HepG2 (cell line): ENCODE measurements at regions of chr6 and their contacts with region 1.

Region 1: DNA sequence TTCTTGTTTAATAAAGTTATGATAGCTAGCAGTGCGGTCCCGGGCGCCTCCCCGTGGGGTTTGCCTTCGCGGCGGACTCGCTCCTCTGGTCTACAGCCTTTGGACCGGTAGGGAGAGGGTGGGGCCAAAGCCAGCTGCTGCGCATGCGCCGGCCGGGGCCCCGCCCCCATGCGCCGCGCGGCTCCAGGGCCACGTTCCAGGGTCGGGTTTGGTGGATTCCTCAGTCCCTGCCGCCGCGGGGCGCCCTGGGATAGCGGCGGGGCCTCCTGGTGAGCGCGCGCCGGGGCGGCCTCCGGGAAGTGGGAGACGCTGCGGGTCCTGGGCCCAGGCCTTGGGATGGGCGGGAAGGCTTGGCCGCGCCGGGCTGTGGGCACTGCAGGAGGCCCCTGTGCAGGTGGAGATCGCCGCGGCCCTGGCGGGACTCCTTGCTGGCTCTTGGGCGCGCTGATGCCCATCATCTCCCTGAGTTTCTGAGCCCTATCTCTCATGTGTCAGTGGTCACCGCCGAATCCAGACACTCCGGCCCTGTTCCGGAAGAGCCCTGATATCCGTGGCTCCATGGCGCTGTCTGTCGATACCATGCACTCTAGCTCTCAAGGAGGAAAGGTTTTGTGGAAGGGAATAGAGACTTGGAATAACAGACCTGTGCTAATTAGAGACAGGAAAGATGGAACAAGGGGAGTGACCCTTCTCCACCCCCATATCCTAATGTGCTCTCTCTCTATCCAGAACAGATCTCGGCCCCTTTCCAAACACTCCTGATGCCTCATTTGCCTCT is at the start of gene VARS2:
- DNase-seq: peak; percentile 92
- ATAC-seq: peak; percentile 96
- H3K4me3 ChIP-seq: peak within 1 kb of the TSS; percentile 61 to 80 (median 78)
- H3K27ac ChIP-seq: peak within 1 kb of the TSS; percentile 81
- H3K4me1 ChIP-seq: peaks cover 32% of the 10 kb centered on the region
- H3K27me3 ChIP-seq: no peaks in the 10 kb centered on the region
- CTCF ChIP-seq: peak; percentile 81
- EP300 ChIP-seq: peak in 1 of 2 experiments; percentile 35; a peak in 1 of 4 replicates
- POLR2A ChIP-seq: peak; percentile 85 to 89
- RAD21 ChIP-seq: peak; percentile 85; the same call in 1 of the 2 replicates
- total RNA-seq, gene VARS2: 45.9 and 71.8 TPM in 2 replicates

Region 2: DNA sequence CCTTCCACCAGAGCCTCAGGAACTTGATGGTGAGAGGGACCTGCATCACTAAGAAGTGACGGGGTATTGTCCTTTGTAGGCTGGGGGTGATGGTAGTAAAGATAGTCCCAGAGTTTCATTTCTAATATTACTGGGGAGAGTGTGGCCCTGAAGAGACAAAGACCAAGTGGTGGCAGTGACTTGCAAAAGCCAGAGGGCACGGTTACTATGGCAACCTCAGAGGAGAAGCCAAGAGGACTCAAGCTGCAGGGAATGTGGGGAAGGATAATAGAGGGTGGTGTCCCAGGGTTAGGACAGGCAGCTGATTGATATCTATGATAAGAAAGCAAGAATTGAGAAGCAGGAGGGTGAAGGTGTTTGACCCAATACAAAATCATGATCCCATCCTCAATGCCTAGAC is 1044.2 kb before region 1 on chr6:
- CTCF ChIA-PET with region 1: no interaction called
- POLR2A ChIA-PET with region 1: no interaction called
- in situ Hi-C with region 1: no loop called
- intact Hi-C with region 1: no loop called
- DNase-seq: no peak
- ATAC-seq: no peak
- H3K4me3 ChIP-seq: no peak overlapping the region
- H3K27ac ChIP-seq: no peak overlapping the region
- H3K4me1 ChIP-seq: no peaks in the 10 kb centered on the region
- H3K27me3 ChIP-seq: peaks cover 0 to 24% of the 10 kb centered on the region in 2 experiments; a peak in 2 of 5 replicates
- CTCF ChIP-seq: no peak
- EP300 ChIP-seq: no peak
- POLR2A ChIP-seq: no peak
- RAD21 ChIP-seq: no peak

Region 3: GRCh38 chr6:30883685-30884520 is 30.4 kb before region 1 on chr6 and contains the start of gene DDR1:
- CTCF ChIA-PET with region 1: no interaction called
- POLR2A ChIA-PET with region 1: interaction called, 24 read pairs
- in situ Hi-C with region 1: no loop called
- intact Hi-C with region 1: no loop called
- DNase-seq: peak; percentile 38
- ATAC-seq: peak; percentile 57
- H3K4me3 ChIP-seq: peak within 1 kb of the TSS; percentile 80 to 91 (median 82)
- H3K27ac ChIP-seq: peak within 1 kb of the TSS; percentile 44
- H3K4me1 ChIP-seq: peaks cover 56% of the 10 kb centered on the region
- H3K27me3 ChIP-seq: peaks cover 6 to 27% of the 10 kb centered on the region in 2 experiments
- CTCF ChIP-seq: no peak
- EP300 ChIP-seq: no peak
- POLR2A ChIP-seq: no peak
- RAD21 ChIP-seq: no peak
- total RNA-seq, gene DDR1: 7.0 and 16.7 TPM in 2 replicates

Region 4: DNA sequence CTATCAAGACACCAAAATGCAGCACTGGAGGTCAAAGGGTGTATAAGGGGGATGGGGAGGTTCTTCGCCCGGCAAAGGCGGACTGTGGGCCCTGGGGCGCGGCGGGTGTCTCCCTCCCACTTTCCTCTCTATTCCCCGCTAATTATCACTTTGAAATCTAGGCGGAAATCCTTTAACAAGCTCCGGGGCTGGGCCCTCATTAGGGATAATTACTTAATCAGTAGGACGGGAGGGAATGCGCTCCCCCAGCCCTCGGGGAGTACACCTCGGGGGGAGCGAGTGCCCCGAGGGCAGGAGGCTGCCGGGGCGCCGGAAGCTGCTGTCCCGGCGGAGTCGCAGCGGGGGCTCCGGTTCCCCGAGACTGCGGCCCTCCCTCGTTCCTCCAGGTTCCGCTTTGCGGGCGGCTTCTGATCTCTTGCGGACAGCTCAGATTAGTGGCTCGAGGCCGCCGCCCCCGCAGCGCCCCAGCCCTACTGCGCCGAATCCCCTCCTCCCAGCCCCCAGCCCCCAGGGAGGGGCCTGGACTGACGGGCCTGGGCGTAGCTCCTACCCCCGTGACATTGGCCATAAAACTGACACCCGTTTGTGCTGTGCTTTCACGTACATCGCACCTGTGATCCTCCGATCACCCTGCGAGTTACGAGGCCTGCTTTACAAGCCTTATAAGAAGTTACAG is 41.2 kb after region 1 on chr6:
- CTCF ChIA-PET with region 1: no interaction called
- POLR2A ChIA-PET with region 1: no interaction called
- in situ Hi-C with region 1: no loop called
- intact Hi-C with region 1: no loop called
- DNase-seq: no peak
- ATAC-seq: no peak
- H3K4me3 ChIP-seq: no peak overlapping the region
- H3K27ac ChIP-seq: no peak overlapping the region
- H3K4me1 ChIP-seq: no peaks in the 10 kb centered on the region
- H3K27me3 ChIP-seq: peaks cover 2 to 48% of the 10 kb centered on the region in 2 experiments; a peak in 4 of 5 replicates
- CTCF ChIP-seq: no peak
- EP300 ChIP-seq: no peak
- POLR2A ChIP-seq: no peak
- RAD21 ChIP-seq: no peak

Region 5: GRCh38 chr6:31042806-31043205 is 128.5 kb after region 1 on chr6:
- CTCF ChIA-PET with region 1: interaction called, 11 read pairs
- POLR2A ChIA-PET with region 1: interaction called, 3 read pairs
- in situ Hi-C with region 1: loop called (anchors 5 kb)
- intact Hi-C with region 1: loop called (anchors 1 kb)
- DNase-seq: peak; percentile 56
- ATAC-seq: peak; percentile 64
- H3K4me3 ChIP-seq: no peak overlapping the region
- H3K27ac ChIP-seq: no peak overlapping the region
- H3K4me1 ChIP-seq: peaks cover 12% of the 10 kb centered on the region
- H3K27me3 ChIP-seq: peaks cover 0 to 26% of the 10 kb centered on the region in 2 experiments; a peak in 3 of 5 replicates
- CTCF ChIP-seq: peak; percentile 75
- EP300 ChIP-seq: no peak
- POLR2A ChIP-seq: no peak
- RAD21 ChIP-seq: 0 out of 2 replicates have a peak, but pooled peaks have one; percentile 48

Region 6: DNA sequence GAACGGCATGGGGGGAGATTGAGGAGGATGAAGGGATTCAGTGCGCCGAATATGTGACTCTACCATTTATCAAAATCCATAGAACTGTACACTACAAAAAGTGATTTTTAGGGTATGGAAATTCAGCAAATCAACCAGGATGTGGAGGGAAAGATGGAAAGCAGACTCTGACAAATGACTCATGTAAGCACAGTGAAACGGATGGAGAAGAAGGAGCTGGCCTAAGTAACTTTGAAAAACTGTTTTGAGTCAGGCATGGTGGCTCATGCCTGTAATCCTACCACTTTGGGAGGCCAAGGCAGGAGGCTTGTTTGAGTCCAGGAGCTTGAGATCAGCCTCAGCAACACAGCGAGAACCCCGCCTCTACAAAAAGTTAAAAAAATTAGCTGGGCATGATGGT is 135.3 kb after region 1 on chr6:
- CTCF ChIA-PET with region 1: no interaction called
- POLR2A ChIA-PET with region 1: no interaction called
- in situ Hi-C with region 1: loop called (anchors 5 kb)
- intact Hi-C with region 1: no loop called
- DNase-seq: no peak
- ATAC-seq: no peak
- H3K4me3 ChIP-seq: no peak overlapping the region
- H3K27ac ChIP-seq: no peak overlapping the region
- H3K4me1 ChIP-seq: no peaks in the 10 kb centered on the region
- H3K27me3 ChIP-seq: peaks cover 3 to 39% of the 10 kb centered on the region in 2 experiments; a peak in 3 of 5 replicates
- CTCF ChIP-seq: no peak
- EP300 ChIP-seq: no peak
- POLR2A ChIP-seq: no peak
- RAD21 ChIP-seq: no peak

Region 7: GRCh38 chr6:31068669-31069340 is 154.5 kb after region 1 on chr6:
- CTCF ChIA-PET with region 1: interaction called, 9 read pairs
- POLR2A ChIA-PET with region 1: interaction called, 4 read pairs
- in situ Hi-C with region 1: no loop called
- intact Hi-C with region 1: loop called (anchors 1 kb)
- DNase-seq: peak; percentile 73
- ATAC-seq: peak; percentile 96
- H3K4me3 ChIP-seq: no peak overlapping the region
- H3K27ac ChIP-seq: no peak overlapping the region
- H3K4me1 ChIP-seq: no peaks in the 10 kb centered on the region
- H3K27me3 ChIP-seq: peaks cover 0 to 7% of the 10 kb centered on the region in 2 experiments; a peak in 3 of 5 replicates
- CTCF ChIP-seq: peak; percentile 93
- EP300 ChIP-seq: no peak
- POLR2A ChIP-seq: no peak
- RAD21 ChIP-seq: peak; percentile 53

Region 8: GRCh38 chr6:31079656-31080261 is 165.5 kb after region 1 on chr6:
- CTCF ChIA-PET with region 1: interaction called, 9 read pairs
- POLR2A ChIA-PET with region 1: interaction called, 5 read pairs
- in situ Hi-C with region 1: loop called (anchors 5 kb)
- intact Hi-C with region 1: loop called (anchors 2 kb)
- DNase-seq: peak; percentile 64
- ATAC-seq: peak; percentile 88
- H3K4me3 ChIP-seq: no peak overlapping the region
- H3K27ac ChIP-seq: no peak overlapping the region
- H3K4me1 ChIP-seq: peaks cover 6% of the 10 kb centered on the region; the same call in 1 of the 2 replicates
- H3K27me3 ChIP-seq: peaks cover 1 to 7% of the 10 kb centered on the region in 2 experiments; a peak in 3 of 5 replicates
- CTCF ChIP-seq: peak; percentile 81
- EP300 ChIP-seq: no peak
- POLR2A ChIP-seq: no peak
- RAD21 ChIP-seq: peak; percentile 48; the same call in 1 of the 2 replicates

Region 9: GRCh38 chr6:31087494-31088089 is 173.3 kb after region 1 on chr6:
- CTCF ChIA-PET with region 1: interaction called, 4 read pairs
- POLR2A ChIA-PET with region 1: interaction called, 4 read pairs
- in situ Hi-C with region 1: no loop called
- intact Hi-C with region 1: loop called (anchors 1 kb)
- DNase-seq: peak; percentile 78
- ATAC-seq: peak; percentile 95
- H3K4me3 ChIP-seq: no peak overlapping the region
- H3K27ac ChIP-seq: no peak overlapping the region
- H3K4me1 ChIP-seq: peaks cover 26% of the 10 kb centered on the region
- H3K27me3 ChIP-seq: peaks cover 1 to 15% of the 10 kb centered on the region in 2 experiments; a peak in 2 of 5 replicates
- CTCF ChIP-seq: peak; percentile 91
- EP300 ChIP-seq: no peak
- POLR2A ChIP-seq: no peak
- RAD21 ChIP-seq: peak; percentile 80

Region 10: GRCh38 chr6:31227143-31227542 is 312.9 kb after region 1 on chr6:
- CTCF ChIA-PET with region 1: no interaction called
- POLR2A ChIA-PET with region 1: no interaction called
- in situ Hi-C with region 1: no loop called
- intact Hi-C with region 1: no loop called
- DNase-seq: no peak
- ATAC-seq: no peak
- H3K4me3 ChIP-seq: no peak overlapping the region
- H3K27ac ChIP-seq: no peak overlapping the region
- H3K4me1 ChIP-seq: no peaks in the 10 kb centered on the region
- H3K27me3 ChIP-seq: peaks cover 1 to 25% of the 10 kb centered on the region in 2 experiments; a peak in 3 of 5 replicates
- CTCF ChIP-seq: no peak
- EP300 ChIP-seq: no peak
- POLR2A ChIP-seq: no peak
- RAD21 ChIP-seq: no peak